ENCODE measurements at regions of chr6 and their contacts with region 1.

Region 1: DNA sequence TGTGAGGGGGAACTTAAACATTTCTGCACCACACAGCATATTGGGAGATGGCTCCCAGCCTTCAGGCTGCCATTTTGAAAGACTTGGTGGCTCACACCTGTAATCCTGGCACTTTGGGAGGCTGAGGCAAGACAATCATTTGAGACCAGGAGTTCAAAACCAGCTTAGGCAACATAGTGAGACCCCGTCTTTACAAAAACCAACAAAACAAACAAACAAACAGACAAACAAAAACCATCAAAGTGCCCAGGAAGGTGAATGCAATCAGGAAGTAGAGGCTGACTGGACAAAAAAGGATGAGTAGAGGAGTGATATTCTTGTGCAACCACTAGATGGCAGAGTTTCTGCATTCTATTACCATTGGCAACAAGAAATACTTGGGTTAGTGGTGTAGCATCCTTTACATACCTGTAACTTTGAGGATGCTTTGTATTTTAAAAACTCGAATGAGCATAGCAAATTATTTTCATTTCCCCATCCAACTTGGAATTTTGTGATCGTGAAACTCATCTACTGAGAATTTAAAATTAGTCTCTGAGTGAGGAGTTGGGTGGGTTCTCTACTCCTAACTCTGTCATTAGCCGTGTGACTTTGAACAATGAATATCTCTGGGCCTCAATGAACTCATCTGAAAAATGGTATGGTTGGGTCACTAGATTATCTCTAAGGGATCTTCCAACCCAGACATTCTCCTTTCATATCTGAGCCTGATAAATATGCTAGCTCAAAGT is 84.4 kb downstream of the CRYBG1 start:
- DNase-seq: no peak
- H3K4me3 ChIP-seq: no peak overlapping the region
- H3K27ac ChIP-seq: no peak overlapping the region
- H3K4me1 ChIP-seq: peaks cover 0 to 17% (median 0%) of the 10 kb centered on the region in 3 donors
- H3K27me3 ChIP-seq: peaks cover 0 to 25% (median 0%) of the 10 kb centered on the region in 4 donors
- CTCF ChIP-seq: peak; percentile 54 to 85 (median 74)
- POLR2A ChIP-seq: no peak

Region 2: GRCh38 chr6:106360410-106360988 is 84.4 kb before region 1 on chr6 and contains the start of gene CRYBG1:
- intact Hi-C with region 1: loop called (anchors 10 kb)
- DNase-seq: no peak
- H3K4me3 ChIP-seq: peak within 1 kb of the TSS; percentile 75 to 81 (median 77)
- H3K27ac ChIP-seq: peak within 1 kb of the TSS; percentile 31 to 89 (median 87)
- H3K4me1 ChIP-seq: peaks cover 0 to 46% (median 8%) of the 10 kb centered on the region in 3 donors
- H3K27me3 ChIP-seq: peaks cover 0 to 58% (median 0%) of the 10 kb centered on the region in 4 donors
- CTCF ChIP-seq: peak; percentile 80 to 100 (median 98)
- POLR2A ChIP-seq: peak in 2 of 4 donors; percentile 49 to 60
- total RNA-seq, gene CRYBG1: 119 to 185 (median 153) TPM

Region 3: DNA sequence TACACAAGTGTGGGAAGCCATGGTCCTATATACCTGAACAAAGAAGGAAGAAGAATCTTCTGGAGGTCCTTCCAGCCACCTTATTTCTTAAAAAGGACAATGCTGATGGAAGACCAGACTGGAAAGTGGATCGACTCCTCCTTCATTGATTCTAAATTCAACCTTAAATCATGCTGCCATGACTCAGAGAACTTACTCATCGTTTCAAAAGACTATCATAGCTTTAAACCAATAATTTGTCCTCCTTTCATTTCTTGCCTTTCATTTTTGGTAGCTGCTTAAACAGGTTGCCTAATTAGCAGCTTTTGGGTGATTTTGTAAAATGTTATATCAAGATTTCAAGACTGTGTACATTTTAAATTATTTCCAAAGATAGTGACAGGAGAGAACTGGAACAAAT is 123.6 kb after region 1 on chr6:
- intact Hi-C with region 1: loop called (anchors 5 kb)
- DNase-seq: no peak
- H3K4me3 ChIP-seq: no peak overlapping the region
- H3K27ac ChIP-seq: peak overlapping the region in 1 of 4 donors; percentile 17
- H3K4me1 ChIP-seq: peaks cover 0 to 12% (median 0%) of the 10 kb centered on the region in 3 donors
- H3K27me3 ChIP-seq: no peaks in the 10 kb centered on the region
- CTCF ChIP-seq: no peak
- POLR2A ChIP-seq: no peak

Measured in esophagus squamous epithelium (tissue), 5 donors.